ENCODE measurements at regions of chr6 and their contacts with region 1.

Region 1: GRCh38 chr6:111259089-111259831 is 172.0 kb downstream of the SLC16A10 start:
- DNase-seq: peak; percentile 97
- H3K4me3 Mint-ChIP-seq: peak overlapping the region; percentile 74
- H3K27ac Mint-ChIP-seq: peak overlapping the region; percentile 60
- H3K4me1 Mint-ChIP-seq: peaks cover 8% of the 10 kb centered on the region
- H3K27me3 Mint-ChIP-seq: no peaks in the 10 kb centered on the region
- CTCF ChIP-seq: peak; percentile 89

Region 2: GRCh38 chr6:111011360-111012142 is 247.7 kb before region 1 on chr6:
- CTCF ChIA-PET with region 1: interaction called, 3 read pairs
- intact Hi-C with region 1: loop called (anchors 5 kb)
- DNase-seq: peak; percentile 8
- H3K4me3 Mint-ChIP-seq: no peak overlapping the region
- H3K27ac Mint-ChIP-seq: no peak overlapping the region
- H3K4me1 Mint-ChIP-seq: peaks cover 9% of the 10 kb centered on the region
- H3K27me3 Mint-ChIP-seq: no peaks in the 10 kb centered on the region
- CTCF ChIP-seq: peak; percentile 50

Region 3: GRCh38 chr6:111057074-111057752 is 202.0 kb before region 1 on chr6:
- CTCF ChIA-PET with region 1: no interaction called
- intact Hi-C with region 1: loop called (anchors 2 kb)
- DNase-seq: peak; percentile 29
- H3K4me3 Mint-ChIP-seq: no peak overlapping the region
- H3K27ac Mint-ChIP-seq: no peak overlapping the region
- H3K4me1 Mint-ChIP-seq: no peaks in the 10 kb centered on the region
- H3K27me3 Mint-ChIP-seq: peaks cover 40% of the 10 kb centered on the region
- CTCF ChIP-seq: no peak

Region 4: GRCh38 chr6:111211411-111212030 is 47.7 kb before region 1 on chr6:
- CTCF ChIA-PET with region 1: no interaction called
- intact Hi-C with region 1: no loop called
- DNase-seq: no peak
- H3K4me3 Mint-ChIP-seq: no peak overlapping the region
- H3K27ac Mint-ChIP-seq: no peak overlapping the region
- H3K4me1 Mint-ChIP-seq: no peaks in the 10 kb centered on the region
- H3K27me3 Mint-ChIP-seq: no peaks in the 10 kb centered on the region
- CTCF ChIP-seq: no peak

Region 5: DNA sequence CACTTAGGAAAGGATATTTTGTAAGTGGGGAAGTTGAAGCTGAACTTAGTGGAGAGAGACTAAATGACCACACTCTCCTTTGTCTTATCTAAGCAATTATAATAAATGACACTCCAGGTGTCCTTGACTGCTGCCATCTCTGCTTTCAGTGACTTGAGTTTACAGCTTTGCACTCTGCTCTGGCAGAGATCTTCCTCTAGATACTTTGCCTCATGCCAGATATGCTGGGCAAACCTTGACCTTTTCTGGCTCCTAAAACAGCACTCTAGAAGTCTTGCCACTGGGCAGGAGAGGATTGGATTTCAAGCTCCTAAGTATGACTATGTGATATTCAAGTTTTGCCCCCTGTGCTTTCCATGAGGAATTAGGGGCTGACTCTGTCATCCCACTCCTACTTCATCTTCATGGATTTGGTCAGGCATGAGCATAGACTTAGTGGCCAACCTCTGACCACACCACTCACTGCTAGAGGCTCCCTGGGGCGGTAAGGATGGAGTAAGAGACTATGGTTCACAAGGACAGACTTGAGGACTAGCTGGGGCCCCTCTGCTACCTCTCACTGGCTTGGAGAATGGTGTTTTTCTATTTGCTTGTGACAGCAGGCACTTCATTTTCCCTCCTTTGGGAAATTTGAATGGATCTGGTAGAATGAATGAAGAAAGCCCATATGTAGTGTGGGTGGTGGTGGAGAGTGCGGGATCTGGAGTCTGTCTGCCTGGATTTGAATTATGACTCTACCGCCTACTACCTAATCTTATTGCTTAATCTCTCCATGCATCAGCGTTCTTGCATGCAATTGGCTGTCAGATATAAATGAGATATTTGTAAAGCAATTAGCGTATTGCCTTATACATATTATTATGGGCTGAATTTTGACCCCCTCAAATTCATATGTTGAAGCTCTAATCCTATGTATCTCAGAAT is 32.3 kb after region 1 on chr6:
- CTCF ChIA-PET with region 1: no interaction called
- intact Hi-C with region 1: no loop called
- DNase-seq: no peak
- H3K4me3 Mint-ChIP-seq: no peak overlapping the region
- H3K27ac Mint-ChIP-seq: no peak overlapping the region
- H3K4me1 Mint-ChIP-seq: no peaks in the 10 kb centered on the region
- H3K27me3 Mint-ChIP-seq: no peaks in the 10 kb centered on the region
- CTCF ChIP-seq: no peak

Region 6: DNA sequence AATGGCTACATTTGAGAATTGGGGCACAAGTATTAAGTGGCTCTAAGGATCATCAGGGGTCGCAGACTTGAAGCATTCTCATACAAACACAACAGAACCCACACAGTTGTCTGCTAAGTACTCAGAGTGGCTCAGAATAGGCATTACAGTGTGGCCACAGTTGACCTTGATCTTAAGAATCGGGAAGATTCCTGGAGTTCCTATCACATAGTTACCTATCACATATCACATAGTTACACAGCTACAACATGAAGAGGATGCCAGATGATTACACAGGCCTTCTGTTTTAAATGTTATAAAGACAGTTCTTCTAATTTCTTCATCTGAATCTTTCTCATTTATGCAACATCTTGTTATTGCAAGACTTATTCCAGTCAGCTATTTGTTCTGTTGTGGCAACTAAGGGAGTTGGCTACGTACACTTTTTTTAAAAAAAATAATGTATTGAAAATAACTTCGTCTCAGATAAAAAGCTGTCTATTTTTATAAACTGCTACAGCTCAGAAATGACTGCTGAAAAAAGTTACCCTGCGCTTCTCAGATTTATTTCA is 94.7 kb after region 1 on chr6:
- CTCF ChIA-PET with region 1: no interaction called
- intact Hi-C with region 1: loop called (anchors 10 kb)
- DNase-seq: no peak
- H3K4me3 Mint-ChIP-seq: no peak overlapping the region
- H3K27ac Mint-ChIP-seq: no peak overlapping the region
- H3K4me1 Mint-ChIP-seq: peaks cover 31% of the 10 kb centered on the region
- H3K27me3 Mint-ChIP-seq: no peaks in the 10 kb centered on the region
- CTCF ChIP-seq: no peak

Region 7: GRCh38 chr6:111478749-111479148 is 219.5 kb after region 1 on chr6:
- CTCF ChIA-PET with region 1: interaction called, 22 read pairs
- intact Hi-C with region 1: loop called (anchors 1 kb)
- DNase-seq: no peak
- H3K4me3 Mint-ChIP-seq: no peak overlapping the region
- H3K27ac Mint-ChIP-seq: no peak overlapping the region
- H3K4me1 Mint-ChIP-seq: peaks cover 24% of the 10 kb centered on the region
- H3K27me3 Mint-ChIP-seq: no peaks in the 10 kb centered on the region
- CTCF ChIP-seq: no peak

Region 8: GRCh38 chr6:111642463-111643158 is 383.4 kb after region 1 on chr6:
- CTCF ChIA-PET with region 1: interaction called, 11 read pairs
- intact Hi-C with region 1: loop called (anchors 10 kb)
- DNase-seq: peak; percentile 73
- H3K4me3 Mint-ChIP-seq: no peak overlapping the region
- H3K27ac Mint-ChIP-seq: no peak overlapping the region
- H3K4me1 Mint-ChIP-seq: no peaks in the 10 kb centered on the region
- H3K27me3 Mint-ChIP-seq: no peaks in the 10 kb centered on the region
- CTCF ChIP-seq: peak; percentile 35

Measured in Calu3 (cell line).